Activated B cell treated with CpG ODN at 0.5 μM for 24 hours (primary cell): ENCODE measurements at regions of chrX and their contacts with region 1.

Region 1: GRCh38 chrX:101051549-101052302 is at the start of gene TRMT2B:
- DNase-seq: peak; percentile 65
- ATAC-seq: peak; percentile 87
- H3K4me3 Mint-ChIP-seq: peak within 1 kb of the TSS; percentile 90
- H3K27ac Mint-ChIP-seq: peak within 1 kb of the TSS; percentile 93
- H3K4me1 Mint-ChIP-seq: peaks cover 25% of the 10 kb centered on the region
- H3K27me3 Mint-ChIP-seq: no peaks in the 10 kb centered on the region
- CTCF ChIP-seq: no peak
- total RNA-seq, gene TRMT2B: 28.8 and 37.9 TPM in 2 replicates

Region 2: DNA sequence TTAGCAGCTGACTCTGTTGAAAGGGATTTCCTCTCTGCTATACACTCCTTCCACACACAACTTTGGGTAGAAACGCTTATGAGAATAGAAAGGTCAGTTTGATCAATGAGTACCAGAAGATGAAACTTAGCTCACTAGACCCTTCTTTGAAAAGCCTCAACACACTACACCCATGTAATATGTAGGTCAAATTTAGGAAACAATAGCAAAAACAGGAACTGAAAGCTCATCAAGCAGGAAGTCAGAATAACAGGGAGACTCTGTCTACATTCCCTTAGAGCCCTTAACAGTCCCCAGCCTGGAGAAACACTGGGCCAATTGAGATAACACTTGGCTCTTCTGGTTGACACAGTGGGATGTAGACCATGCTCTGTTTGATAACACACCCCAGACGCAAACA is 377.0 kb before region 1 on chrX:
- CTCF ChIA-PET with region 1: no interaction called
- POLR2A ChIA-PET with region 1: no interaction called
- intact Hi-C with region 1: no loop called
- DNase-seq: no peak
- ATAC-seq: no peak
- H3K4me3 Mint-ChIP-seq: no peak overlapping the region
- H3K27ac Mint-ChIP-seq: no peak overlapping the region
- H3K4me1 Mint-ChIP-seq: peaks cover 15% of the 10 kb centered on the region
- H3K27me3 Mint-ChIP-seq: no peaks in the 10 kb centered on the region
- CTCF ChIP-seq: no peak

Region 3: DNA sequence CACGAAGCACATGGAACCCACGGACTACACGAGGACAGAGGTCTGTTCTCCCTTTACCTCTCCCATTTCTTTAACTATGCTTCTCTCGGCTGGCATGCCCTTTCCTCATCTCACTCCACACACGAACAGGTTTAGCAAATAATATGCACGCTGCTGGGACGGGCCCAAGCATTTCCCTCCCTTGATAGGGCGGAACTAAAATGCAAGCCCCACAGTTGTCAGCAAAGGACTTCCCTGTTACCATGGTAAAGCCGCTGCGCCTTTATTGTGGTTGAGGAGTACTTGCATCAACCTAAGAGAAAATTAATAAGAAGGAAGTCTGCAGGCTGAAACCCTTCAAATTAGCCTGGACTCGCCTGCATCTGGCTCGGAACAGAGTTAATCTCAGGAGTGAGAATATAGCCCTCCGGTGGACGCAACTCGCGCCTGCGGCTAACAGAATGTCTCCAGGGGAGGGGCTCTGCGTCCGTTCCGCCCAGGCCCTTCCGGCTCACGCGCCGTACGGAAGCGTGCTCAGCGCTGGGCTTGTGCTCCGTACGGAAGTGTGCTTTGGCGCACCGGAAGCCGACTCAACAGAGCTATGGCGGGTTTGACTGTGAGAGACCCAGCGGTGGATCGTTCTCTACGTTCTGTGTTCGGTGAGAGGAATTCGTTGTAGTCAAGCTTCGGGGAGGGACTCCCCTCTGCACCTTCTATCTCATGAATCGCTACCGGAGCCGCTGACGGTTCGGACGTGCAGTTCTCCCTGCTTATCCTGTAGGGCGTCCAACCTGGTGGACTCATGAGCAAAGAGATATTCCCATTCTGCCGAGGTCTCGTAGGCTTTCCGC is 231.7 kb before region 1 on chrX and contains the start of gene CSTF2:
- CTCF ChIA-PET with region 1: no interaction called
- POLR2A ChIA-PET with region 1: no interaction called
- intact Hi-C with region 1: loop called (anchors 1 kb)
- DNase-seq: peak; percentile 68
- ATAC-seq: peak; percentile 96
- H3K4me3 Mint-ChIP-seq: peak within 1 kb of the TSS; percentile 93
- H3K27ac Mint-ChIP-seq: peak within 1 kb of the TSS; percentile 94
- H3K4me1 Mint-ChIP-seq: peaks cover 4% of the 10 kb centered on the region
- H3K27me3 Mint-ChIP-seq: peaks cover 5% of the 10 kb centered on the region
- CTCF ChIP-seq: no peak
- total RNA-seq, gene CSTF2: 27.7 TPM in 2 replicates

Region 4: GRCh38 chrX:101022020-101022419 is 29.7 kb before region 1 on chrX:
- CTCF ChIA-PET with region 1: no interaction called
- POLR2A ChIA-PET with region 1: no interaction called
- intact Hi-C with region 1: no loop called
- DNase-seq: no peak
- ATAC-seq: no peak
- H3K4me3 Mint-ChIP-seq: no peak overlapping the region
- H3K27ac Mint-ChIP-seq: no peak overlapping the region
- H3K4me1 Mint-ChIP-seq: no peaks in the 10 kb centered on the region
- H3K27me3 Mint-ChIP-seq: no peaks in the 10 kb centered on the region
- CTCF ChIP-seq: no peak

Region 5: DNA sequence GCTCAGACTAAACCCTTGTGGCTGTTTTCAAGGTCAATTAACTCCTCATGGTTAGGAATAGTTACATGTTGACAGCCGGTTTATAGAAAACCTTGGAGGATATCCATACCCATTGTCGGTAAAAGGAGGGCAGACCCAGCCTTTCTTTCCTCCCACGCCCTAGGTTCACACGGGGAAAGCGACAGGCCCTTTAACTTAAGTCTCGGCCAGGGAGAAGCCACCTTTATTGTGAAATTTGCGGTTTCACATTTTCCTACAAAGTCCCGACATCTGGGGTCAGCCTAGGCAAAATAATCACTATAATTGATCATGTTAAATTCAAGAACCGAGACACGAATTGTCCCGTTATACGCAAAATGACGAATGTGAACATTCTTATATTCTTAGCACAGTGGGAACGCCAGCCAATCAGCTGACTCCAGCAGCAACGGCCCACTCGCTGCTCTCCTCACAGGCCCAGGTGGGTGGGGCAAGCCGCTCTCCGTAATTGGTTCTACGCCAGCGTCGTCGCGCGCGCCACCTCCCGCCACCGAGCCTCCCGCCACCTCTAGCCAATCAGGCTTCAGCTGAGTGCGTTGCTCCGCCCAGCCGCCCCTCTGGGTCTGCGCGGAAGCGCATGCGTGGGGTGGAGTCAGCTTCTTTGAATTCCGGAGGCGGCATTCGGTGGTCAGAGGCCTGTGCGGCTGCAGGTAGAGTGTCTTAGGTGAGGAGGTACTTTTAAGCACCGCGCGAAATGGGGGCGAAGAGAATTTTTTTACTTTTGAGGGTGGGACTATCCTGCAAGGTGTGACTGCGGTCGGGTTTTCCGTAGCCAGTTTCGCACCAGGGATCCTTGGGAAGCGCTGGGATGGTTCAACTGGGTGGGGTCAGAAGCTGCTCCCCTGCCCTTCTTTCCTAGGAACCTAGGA is 46.1 kb after region 1 on chrX and contains the start of gene CENPI:
- CTCF ChIA-PET with region 1: no interaction called
- POLR2A ChIA-PET with region 1: interaction called, 6 read pairs
- intact Hi-C with region 1: loop called (anchors 1 kb)
- DNase-seq: peak; percentile 78
- ATAC-seq: peak; percentile 99
- H3K4me3 Mint-ChIP-seq: peak within 1 kb of the TSS; percentile 86
- H3K27ac Mint-ChIP-seq: peak within 1 kb of the TSS; percentile 91
- H3K4me1 Mint-ChIP-seq: peaks cover 9% of the 10 kb centered on the region
- H3K27me3 Mint-ChIP-seq: no peaks in the 10 kb centered on the region
- CTCF ChIP-seq: no peak
- total RNA-seq, gene CENPI: 2.6 and 3.1 TPM in 2 replicates

Region 6: DNA sequence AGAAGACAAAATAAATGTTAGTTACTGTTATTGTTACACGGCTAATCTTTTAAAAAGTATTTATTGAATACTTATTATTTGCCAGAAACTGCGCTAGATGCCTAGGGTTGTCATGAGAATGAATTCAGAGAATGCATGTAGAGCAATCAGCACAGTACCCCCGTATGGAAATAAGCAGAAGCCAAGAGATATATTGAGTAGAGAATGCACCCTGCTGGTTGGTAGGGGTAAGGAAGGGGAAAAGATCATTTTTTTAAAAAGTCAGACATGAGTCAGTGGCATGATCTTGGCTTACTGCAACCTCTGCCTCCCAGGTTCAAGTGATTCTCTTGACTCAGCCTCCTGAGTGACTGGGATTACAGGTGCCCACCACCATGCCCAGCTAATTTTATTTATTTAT is 154.7 kb after region 1 on chrX:
- CTCF ChIA-PET with region 1: no interaction called
- POLR2A ChIA-PET with region 1: no interaction called
- intact Hi-C with region 1: loop called (anchors 1 kb)
- DNase-seq: no peak
- ATAC-seq: peak; percentile 73
- H3K4me3 Mint-ChIP-seq: no peak overlapping the region
- H3K27ac Mint-ChIP-seq: no peak overlapping the region
- H3K4me1 Mint-ChIP-seq: peaks cover 16% of the 10 kb centered on the region
- H3K27me3 Mint-ChIP-seq: no peaks in the 10 kb centered on the region
- CTCF ChIP-seq: no peak

Region 7: GRCh38 chrX:101390664-101391525 is 339.2 kb after region 1 on chrX and contains the start of gene RPL36A:
- CTCF ChIA-PET with region 1: no interaction called
- POLR2A ChIA-PET with region 1: no interaction called
- intact Hi-C with region 1: loop called (anchors 10 kb)
- DNase-seq: peak; percentile 61
- ATAC-seq: peak; percentile 76
- H3K4me3 Mint-ChIP-seq: peak within 1 kb of the TSS; percentile 95
- H3K27ac Mint-ChIP-seq: peak within 1 kb of the TSS; percentile 94
- H3K4me1 Mint-ChIP-seq: peaks cover 47% of the 10 kb centered on the region
- H3K27me3 Mint-ChIP-seq: no peaks in the 10 kb centered on the region
- CTCF ChIP-seq: no peak
- total RNA-seq, gene RPL36A: 234 and 287 TPM in 2 replicates